ENCODE measurements at regions of chr12 and their contacts with region 1.

Region 1: DNA sequence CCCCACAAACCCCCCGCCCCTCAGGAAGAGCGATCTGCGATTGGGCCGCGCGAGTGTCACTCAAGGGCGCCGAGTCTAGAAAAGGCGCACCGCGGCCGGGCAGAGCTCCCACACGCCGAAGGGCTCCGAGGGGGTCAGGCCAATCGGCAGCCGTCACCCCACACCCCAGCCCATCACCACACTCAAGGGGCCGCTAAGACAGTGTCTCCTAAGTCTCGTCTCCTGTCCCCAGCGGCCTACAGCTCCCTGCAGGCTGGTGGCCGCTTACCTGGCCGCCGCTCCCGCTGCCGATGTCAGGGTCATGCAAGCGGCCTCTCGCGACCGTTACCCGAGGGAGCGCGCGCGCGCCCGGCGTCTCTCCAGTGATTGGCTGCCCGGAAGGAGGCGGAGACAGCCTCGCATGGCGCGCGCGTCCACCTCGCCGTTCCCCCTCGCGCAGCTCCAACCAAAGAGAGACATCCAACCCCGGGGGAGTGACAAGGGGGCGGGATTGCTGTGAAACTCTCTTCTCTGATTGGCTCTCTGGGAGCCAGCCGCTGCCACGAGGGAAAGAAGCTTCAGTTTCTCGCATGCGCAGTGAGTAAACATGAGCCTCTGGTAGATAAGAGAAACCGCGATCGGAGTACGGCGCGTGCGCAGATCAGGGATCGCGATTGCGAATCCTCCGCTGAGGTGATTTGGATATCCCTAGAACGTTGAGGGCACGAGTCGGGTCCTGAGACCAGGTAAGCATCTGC is at the starts of genes MPHOSPH9 and MTRFR:
- DNase-seq: peak; percentile 99
- ATAC-seq: peak; percentile 93
- H3K4me3 ChIP-seq: peak within 1 kb of the TSS; percentile 69 to 97
- H3K27ac ChIP-seq: peak within 1 kb of the TSS; percentile 78
- H3K4me1 ChIP-seq: peaks cover 12 to 21% of the 10 kb centered on the region in 2 experiments; a peak in 3 of 4 replicates
- H3K27me3 ChIP-seq: no peaks in the 10 kb centered on the region
- CTCF ChIP-seq: no peak
- POLR2A ChIP-seq: peak; percentile 91
- RAD21 ChIP-seq: no peak
- total RNA-seq, gene MPHOSPH9: 44.9 TPM
- total RNA-seq, gene MTRFR: 27.0 TPM

Region 2: DNA sequence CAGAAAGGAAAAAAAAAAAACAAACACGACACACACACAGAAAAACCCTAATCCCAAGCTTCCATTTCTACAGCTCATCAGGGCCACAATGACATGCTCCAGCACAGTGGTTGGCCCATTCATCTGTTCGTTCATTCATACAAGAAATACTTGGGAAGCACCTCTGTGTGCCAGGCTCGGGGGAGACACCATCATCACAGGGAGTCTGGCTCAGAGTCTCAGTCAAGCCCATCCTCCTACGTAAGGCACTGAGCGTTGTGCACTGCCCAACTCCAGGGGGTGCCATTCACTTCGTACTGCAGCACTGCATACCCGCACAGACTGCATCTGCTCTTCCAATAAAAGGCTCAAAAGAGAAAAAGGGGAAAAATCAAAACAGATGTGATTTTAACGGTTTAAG is 352.3 kb before region 1 on chr12:
- CTCF ChIA-PET with region 1: no interaction called
- POLR2A ChIA-PET with region 1: no interaction called
- RAD21 ChIA-PET with region 1: no interaction called
- intact Hi-C with region 1: loop called (anchors 5 kb)
- DNase-seq: no peak
- ATAC-seq: peak; percentile 98
- H3K4me3 ChIP-seq: no peak overlapping the region
- H3K27ac ChIP-seq: no peak overlapping the region
- H3K4me1 ChIP-seq: peaks cover 5 to 53% of the 10 kb centered on the region in 2 experiments
- H3K27me3 ChIP-seq: no peaks in the 10 kb centered on the region
- CTCF ChIP-seq: peak; percentile 31 to 74 (median 71); a peak in 5 of 6 replicates
- POLR2A ChIP-seq: no peak
- RAD21 ChIP-seq: peak; percentile 82

Region 3: DNA sequence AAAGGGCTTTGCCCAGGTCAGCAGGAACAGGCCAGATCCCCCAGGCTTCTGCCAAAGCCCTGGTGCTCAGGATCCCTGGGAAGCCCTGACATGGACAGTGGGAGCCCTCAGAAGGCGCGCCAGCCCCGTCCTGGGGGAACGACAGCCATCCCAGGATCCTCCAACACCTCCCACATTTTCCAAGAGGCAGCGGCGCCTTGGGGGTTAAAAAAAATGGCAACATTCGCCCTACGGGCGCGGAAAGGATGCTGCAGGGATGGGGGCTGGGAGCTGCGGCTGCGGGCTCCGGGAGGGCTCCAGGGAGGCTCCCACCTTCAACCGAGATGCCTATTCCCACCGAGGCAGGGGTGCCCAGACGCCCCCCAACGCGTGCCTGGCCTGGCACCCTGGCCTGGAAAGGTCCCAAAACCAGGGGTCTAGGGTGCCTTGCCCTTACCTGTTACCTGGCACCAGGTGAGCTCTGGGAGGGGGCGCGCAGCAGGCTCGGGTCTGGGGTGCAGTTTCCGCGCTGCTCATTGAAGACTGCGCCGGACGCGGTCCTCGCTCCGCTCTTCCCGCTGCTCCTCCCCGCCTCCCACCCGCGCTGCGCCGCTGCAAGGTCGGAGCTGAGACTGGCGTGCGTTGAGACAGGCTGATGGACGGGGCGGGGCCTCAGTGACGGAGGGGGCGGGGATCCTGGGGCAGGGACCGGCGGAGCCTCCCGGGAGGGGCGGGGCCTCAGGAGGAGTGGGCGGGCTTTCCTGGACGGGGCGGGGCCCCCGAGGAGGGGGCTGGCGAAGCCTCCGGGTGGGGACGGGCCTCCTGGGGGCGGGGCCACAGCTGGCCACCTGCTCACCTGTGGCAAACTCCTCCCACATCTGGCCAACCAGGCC is 266.9 kb before region 1 on chr12 and contains the start of gene ABCB9:
- CTCF ChIA-PET with region 1: interaction called, 8 read pairs
- POLR2A ChIA-PET with region 1: interaction called, 11 read pairs
- RAD21 ChIA-PET with region 1: interaction called in 1 of 2 experiments, 3 read pairs
- intact Hi-C with region 1: no loop called
- DNase-seq: peak; percentile 90
- ATAC-seq: peak; percentile 96
- H3K4me3 ChIP-seq: peak within 1 kb of the TSS; percentile 84 to 86
- H3K27ac ChIP-seq: peak within 1 kb of the TSS; percentile 66
- H3K4me1 ChIP-seq: peaks cover 28 to 43% of the 10 kb centered on the region in 2 experiments
- H3K27me3 ChIP-seq: no peaks in the 10 kb centered on the region
- CTCF ChIP-seq: no peak
- POLR2A ChIP-seq: peak; percentile 46
- RAD21 ChIP-seq: no peak
- total RNA-seq, gene ABCB9: 14.7 TPM

Region 4: DNA sequence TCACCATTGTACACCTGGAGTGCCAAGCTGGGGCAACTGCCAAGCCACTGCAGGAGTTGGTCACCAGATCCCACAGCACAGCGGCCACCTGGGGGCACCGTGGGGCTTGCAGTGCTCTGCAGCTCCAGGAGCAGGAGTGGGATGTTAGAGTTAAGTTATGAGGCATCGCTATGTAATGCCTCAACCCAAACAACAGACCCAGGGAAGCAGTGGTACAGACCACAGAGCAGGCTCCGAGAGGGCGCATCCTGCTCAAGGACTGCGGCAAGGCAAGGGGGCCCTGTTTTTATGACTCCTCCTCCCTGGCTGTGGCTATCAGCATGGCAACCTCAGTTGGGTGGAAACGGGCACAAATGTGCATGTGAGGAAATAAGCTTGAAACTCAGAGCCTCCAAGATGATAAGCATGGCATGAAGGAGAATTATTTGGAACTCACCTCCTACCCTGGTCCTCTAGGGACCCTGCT is 189.4 kb before region 1 on chr12:
- CTCF ChIA-PET with region 1: interaction called, 60 read pairs
- POLR2A ChIA-PET with region 1: interaction called, 10 read pairs
- RAD21 ChIA-PET with region 1: interaction called, 16 read pairs
- intact Hi-C with region 1: loop called (anchors 1 kb)
- DNase-seq: peak; percentile 44
- ATAC-seq: peak; percentile 95
- H3K4me3 ChIP-seq: no peak overlapping the region
- H3K27ac ChIP-seq: no peak overlapping the region
- H3K4me1 ChIP-seq: peaks cover 0 to 10% of the 10 kb centered on the region in 2 experiments; a peak in 1 of 4 replicates
- H3K27me3 ChIP-seq: no peaks in the 10 kb centered on the region
- CTCF ChIP-seq: peak; percentile 62 to 70 (median 68); a peak in 5 of 6 replicates
- POLR2A ChIP-seq: no peak
- RAD21 ChIP-seq: peak; percentile 97

Measured in HCT116 (cell line).